ENCODE measurements at regions of chrX and their contacts with region 1.

Region 1: GRCh38 chrX:104195489-104196084 is 29.3 kb downstream of the FAM199X start:
- DNase-seq: peak; percentile 57
- H3K4me3 Mint-ChIP-seq: no peak overlapping the region
- H3K27ac Mint-ChIP-seq: no peak overlapping the region
- H3K4me1 Mint-ChIP-seq: no peaks in the 10 kb centered on the region
- H3K27me3 Mint-ChIP-seq: peaks cover 12% of the 10 kb centered on the region
- CTCF ChIP-seq: peak; percentile 67

Region 2: GRCh38 chrX:104173841-104174240 is 21.7 kb before region 1 on chrX:
- CTCF ChIA-PET with region 1: interaction called, 10 read pairs
- POLR2A ChIA-PET with region 1: no interaction called
- intact Hi-C with region 1: no loop called
- DNase-seq: no peak
- H3K4me3 Mint-ChIP-seq: no peak overlapping the region
- H3K27ac Mint-ChIP-seq: no peak overlapping the region
- H3K4me1 Mint-ChIP-seq: peaks cover 18% of the 10 kb centered on the region
- H3K27me3 Mint-ChIP-seq: peaks cover 33% of the 10 kb centered on the region
- CTCF ChIP-seq: no peak

Region 3: DNA sequence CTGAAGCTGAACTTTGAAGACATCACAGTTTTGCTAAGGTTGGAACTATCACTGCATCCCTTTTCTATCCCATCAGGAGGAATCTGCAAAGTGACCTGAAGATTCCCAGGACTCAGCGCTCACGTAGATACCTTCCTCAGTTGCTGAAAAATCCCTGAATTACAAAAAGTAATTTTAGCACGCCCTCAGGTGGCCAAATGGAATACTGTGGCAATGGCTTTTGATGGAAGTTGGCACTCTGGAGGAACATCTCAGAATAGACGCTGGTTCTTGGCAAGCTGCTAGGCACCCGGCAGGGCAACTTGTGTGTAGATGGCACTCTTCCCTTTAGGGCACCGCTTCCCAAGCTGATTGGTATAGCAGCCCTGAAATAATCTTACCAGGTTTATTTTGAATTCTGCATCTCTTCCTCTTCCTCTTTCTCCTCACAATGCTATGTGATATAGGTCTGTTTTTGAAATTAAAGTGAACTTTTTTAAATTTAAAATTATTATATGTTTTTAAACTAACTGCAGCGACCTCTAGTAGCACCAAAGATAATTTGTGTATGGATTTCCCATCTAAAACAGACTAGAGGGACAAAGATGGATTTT is 75.4 kb after region 1 on chrX:
- CTCF ChIA-PET with region 1: interaction called, 22 read pairs
- POLR2A ChIA-PET with region 1: no interaction called
- intact Hi-C with region 1: loop called (anchors 2 kb)
- DNase-seq: peak; percentile 68
- H3K4me3 Mint-ChIP-seq: no peak overlapping the region
- H3K27ac Mint-ChIP-seq: no peak overlapping the region
- H3K4me1 Mint-ChIP-seq: no peaks in the 10 kb centered on the region
- H3K27me3 Mint-ChIP-seq: peaks cover 78% of the 10 kb centered on the region
- CTCF ChIP-seq: peak; percentile 64

Region 4: GRCh38 chrX:104343428-104344129 is 148.0 kb after region 1 on chrX:
- CTCF ChIA-PET with region 1: no interaction called
- POLR2A ChIA-PET with region 1: no interaction called
- intact Hi-C with region 1: loop called (anchors 5 kb)
- DNase-seq: peak; percentile 81
- H3K4me3 Mint-ChIP-seq: no peak overlapping the region
- H3K27ac Mint-ChIP-seq: peak overlapping the region; percentile 63
- H3K4me1 Mint-ChIP-seq: peaks cover 6% of the 10 kb centered on the region
- H3K27me3 Mint-ChIP-seq: peaks cover 77% of the 10 kb centered on the region
- CTCF ChIP-seq: peak; percentile 47